ENCODE measurements at regions of chr10 and their contacts with region 1.

Region 1: DNA sequence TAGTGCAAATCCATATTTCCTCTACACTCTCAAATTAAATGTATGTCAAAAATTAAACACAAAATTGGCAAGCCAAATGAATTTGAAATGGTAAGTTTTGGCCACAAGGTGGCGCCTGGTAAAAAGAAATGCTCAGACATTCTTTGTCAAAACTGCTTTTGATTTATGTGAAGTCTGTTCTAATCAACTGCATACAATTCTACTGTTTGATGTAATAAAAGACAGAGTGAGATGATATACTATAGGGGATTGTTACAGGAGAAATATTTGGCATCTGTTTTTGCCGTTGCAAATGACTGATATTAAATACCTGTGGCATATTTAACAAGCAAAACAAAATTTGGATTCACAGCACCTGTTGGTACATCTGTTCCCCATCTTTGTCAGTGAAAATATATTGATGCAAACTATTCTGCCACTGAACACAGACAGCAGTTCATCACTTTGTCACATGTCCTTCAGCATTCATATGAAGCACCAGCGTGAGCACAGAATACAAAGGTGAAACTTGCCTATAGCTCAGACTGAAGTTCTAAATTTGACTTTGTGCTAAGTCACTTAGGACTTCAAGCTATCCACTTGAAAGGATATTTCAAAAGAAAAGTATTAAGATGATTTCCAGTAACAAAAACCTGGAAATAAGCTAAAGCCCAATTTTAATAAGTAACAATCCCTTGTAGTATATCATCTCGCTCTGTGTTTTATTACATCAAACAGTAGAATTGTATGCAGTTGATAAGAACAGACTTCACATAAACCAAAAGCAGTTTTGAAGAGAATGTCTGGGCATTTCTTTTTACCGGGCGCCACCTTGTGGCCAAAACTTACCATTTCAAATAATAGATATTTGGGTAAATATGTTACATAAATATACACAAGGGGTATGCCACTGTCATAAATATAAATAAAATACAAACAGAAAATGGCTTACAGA is 10.2 kb upstream of the CH25H start:
- DNase-seq: peak; percentile 20
- ATAC-seq: peak; percentile 49
- H3K4me3 Mint-ChIP-seq: no peak overlapping the region
- H3K27ac Mint-ChIP-seq: no peak overlapping the region
- H3K4me1 Mint-ChIP-seq: peaks cover 10% of the 10 kb centered on the region
- H3K27me3 Mint-ChIP-seq: peaks cover 2% of the 10 kb centered on the region
- CTCF ChIP-seq: no peak

Region 2: GRCh38 chr10:88565072-88565471 is 652.3 kb before region 1 on chr10:
- CTCF ChIA-PET with region 1: interaction called, 4 read pairs
- POLR2A ChIA-PET with region 1: no interaction called
- intact Hi-C with region 1: loop called (anchors 10 kb)
- DNase-seq: no peak
- ATAC-seq: peak; percentile 28
- H3K4me3 Mint-ChIP-seq: no peak overlapping the region
- H3K27ac Mint-ChIP-seq: no peak overlapping the region
- H3K4me1 Mint-ChIP-seq: peaks cover 4% of the 10 kb centered on the region
- H3K27me3 Mint-ChIP-seq: no peaks in the 10 kb centered on the region
- CTCF ChIP-seq: no peak

Region 3: GRCh38 chr10:89207181-89207800 is 10.0 kb before region 1 on chr10 and contains the start of gene CH25H:
- CTCF ChIA-PET with region 1: interaction called, 17 read pairs
- POLR2A ChIA-PET with region 1: no interaction called
- intact Hi-C with region 1: no loop called
- DNase-seq: no peak
- ATAC-seq: peak; percentile 65
- H3K4me3 Mint-ChIP-seq: peak within 1 kb of the TSS; percentile 83
- H3K27ac Mint-ChIP-seq: no peak within 1 kb of the TSS
- H3K4me1 Mint-ChIP-seq: peaks cover 27% of the 10 kb centered on the region
- H3K27me3 Mint-ChIP-seq: peaks cover 47% of the 10 kb centered on the region
- CTCF ChIP-seq: no peak
- total RNA-seq, gene CH25H: not detected in 2 replicates

Region 4: DNA sequence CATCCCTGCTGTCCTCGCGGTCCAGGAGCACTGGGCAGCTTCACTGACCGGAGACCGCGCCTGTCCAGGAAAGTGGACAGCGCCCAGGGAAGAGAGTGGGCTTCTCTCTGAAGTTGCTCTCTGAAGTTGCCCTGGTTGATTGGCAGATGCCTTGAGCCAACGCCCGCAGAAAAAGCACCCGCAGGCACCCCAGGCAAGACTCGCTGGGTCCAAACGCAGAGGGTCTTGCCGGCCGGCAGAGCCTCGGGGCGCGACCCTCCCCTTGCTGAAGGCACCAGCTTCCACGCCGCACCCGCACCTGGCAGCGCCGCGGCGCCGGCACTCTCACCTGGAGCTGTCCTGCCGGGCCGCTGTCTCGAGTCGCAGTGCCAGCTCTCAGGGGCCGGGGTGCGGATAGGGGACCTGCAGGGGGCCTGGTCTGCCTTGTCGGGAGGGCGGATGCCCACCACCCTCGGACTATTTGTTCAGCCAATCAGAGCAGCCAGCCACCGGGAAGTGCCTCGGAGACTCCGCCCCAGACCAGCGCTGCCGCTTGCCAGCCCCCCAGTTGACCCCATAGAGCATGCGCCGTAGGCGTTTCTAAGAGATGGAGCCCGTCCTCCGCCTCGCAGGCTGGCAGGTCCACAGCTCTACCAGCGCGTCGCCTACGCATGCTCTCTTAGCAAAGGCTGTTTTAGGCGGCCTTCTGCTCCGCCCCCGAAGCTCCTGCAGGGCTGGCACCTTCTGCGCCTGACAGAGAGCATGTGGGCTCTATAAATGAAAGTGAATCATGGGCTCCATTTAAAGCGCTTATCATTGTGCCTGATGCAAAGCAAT is 34.3 kb after region 1 on chr10 and contains the start of gene LIPA:
- CTCF ChIA-PET with region 1: interaction called, 13 read pairs
- POLR2A ChIA-PET with region 1: no interaction called
- intact Hi-C with region 1: no loop called
- DNase-seq: peak; percentile 90
- ATAC-seq: peak; percentile 93
- H3K4me3 Mint-ChIP-seq: peak within 1 kb of the TSS; percentile 91
- H3K27ac Mint-ChIP-seq: peak within 1 kb of the TSS; percentile 79
- H3K4me1 Mint-ChIP-seq: peaks cover 26% of the 10 kb centered on the region
- H3K27me3 Mint-ChIP-seq: peaks cover 3% of the 10 kb centered on the region
- CTCF ChIP-seq: no peak
- total RNA-seq, gene LIPA: 32.8 and 35.3 TPM in 2 replicates

Region 5: DNA sequence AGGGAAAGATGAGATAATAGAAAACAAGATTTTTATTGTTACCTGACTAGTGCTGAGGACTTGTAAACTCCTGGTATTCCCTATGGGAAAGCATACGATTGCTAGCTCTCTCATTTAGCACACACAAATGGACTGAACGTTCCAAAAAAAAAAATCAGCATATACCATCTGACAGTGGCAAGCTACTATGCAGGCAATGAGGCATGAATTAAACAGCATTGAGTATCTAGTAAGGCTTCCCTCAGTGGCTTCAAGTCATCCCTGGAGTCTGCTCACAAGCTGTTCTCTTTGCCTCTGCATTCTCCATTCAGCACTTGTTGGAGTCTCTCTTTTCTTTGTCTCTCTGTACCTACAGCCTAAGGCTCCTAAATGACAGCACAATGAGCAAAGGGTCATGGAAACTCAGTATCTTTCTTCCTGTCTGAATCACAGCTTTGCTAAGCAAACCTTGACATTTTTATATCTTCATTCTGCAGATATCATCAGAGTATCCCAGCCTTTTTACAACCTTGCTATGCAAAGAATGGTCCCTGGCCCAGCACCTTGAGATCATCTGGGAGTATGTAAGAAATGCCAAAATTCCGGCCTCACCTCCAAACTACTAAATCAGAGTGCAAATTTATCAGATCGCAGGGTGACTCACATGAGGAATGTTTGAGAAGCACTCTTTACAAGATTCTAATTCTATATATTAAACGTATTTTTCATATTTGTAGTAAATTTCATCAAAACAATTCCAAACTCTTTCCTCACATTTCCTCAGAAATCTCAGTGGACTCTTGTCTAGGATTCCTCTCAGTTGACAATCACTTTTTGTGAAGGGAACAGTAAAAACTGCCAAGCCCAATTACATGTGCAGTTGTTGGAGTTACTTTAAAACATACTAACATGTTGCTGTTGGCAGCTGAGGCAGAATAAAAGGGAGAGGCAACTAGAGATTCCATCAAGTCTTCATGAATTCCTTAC is 45.0 kb after region 1 on chr10:
- CTCF ChIA-PET with region 1: no interaction called
- POLR2A ChIA-PET with region 1: no interaction called
- intact Hi-C with region 1: no loop called
- DNase-seq: no peak
- ATAC-seq: no peak
- H3K4me3 Mint-ChIP-seq: no peak overlapping the region
- H3K27ac Mint-ChIP-seq: no peak overlapping the region
- H3K4me1 Mint-ChIP-seq: peaks cover 3% of the 10 kb centered on the region
- H3K27me3 Mint-ChIP-seq: no peaks in the 10 kb centered on the region
- CTCF ChIP-seq: no peak

Region 6: GRCh38 chr10:89563861-89564478 is 346.6 kb after region 1 on chr10:
- CTCF ChIA-PET with region 1: interaction called, 8 read pairs
- POLR2A ChIA-PET with region 1: no interaction called
- intact Hi-C with region 1: loop called (anchors 1 kb)
- DNase-seq: no peak
- ATAC-seq: peak; percentile 57
- H3K4me3 Mint-ChIP-seq: no peak overlapping the region
- H3K27ac Mint-ChIP-seq: no peak overlapping the region
- H3K4me1 Mint-ChIP-seq: no peaks in the 10 kb centered on the region
- H3K27me3 Mint-ChIP-seq: peaks cover 14% of the 10 kb centered on the region
- CTCF ChIP-seq: no peak

Region 7: DNA sequence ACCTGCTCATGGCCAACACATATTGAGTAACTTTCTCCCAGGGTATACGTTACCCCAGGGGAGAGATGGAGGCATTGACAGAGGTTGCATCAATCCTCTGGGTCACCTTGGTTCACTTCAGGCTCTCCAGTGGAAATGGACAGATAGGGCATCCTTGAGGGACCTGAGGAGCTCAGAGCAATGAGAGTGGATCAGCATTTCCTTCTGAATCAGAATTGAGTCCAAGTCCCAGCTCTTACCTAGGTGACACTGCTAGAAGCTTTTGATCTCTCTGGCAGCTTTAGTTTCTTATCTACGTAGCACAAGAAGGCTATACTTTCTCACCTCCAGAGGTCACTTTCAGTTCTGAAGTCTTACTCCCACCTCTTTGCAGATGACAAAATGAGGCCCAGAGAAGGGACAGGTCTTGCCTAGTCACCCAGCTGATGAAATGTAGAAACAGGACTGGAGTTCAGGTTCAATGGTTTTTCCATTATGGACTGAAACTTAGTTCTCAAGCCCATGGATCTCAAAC is 392.6 kb after region 1 on chr10:
- CTCF ChIA-PET with region 1: no interaction called
- POLR2A ChIA-PET with region 1: no interaction called
- intact Hi-C with region 1: no loop called
- DNase-seq: no peak
- ATAC-seq: no peak
- H3K4me3 Mint-ChIP-seq: no peak overlapping the region
- H3K27ac Mint-ChIP-seq: no peak overlapping the region
- H3K4me1 Mint-ChIP-seq: no peaks in the 10 kb centered on the region
- H3K27me3 Mint-ChIP-seq: no peaks in the 10 kb centered on the region
- CTCF ChIP-seq: no peak

Region 8: GRCh38 chr10:89665302-89665701 is 448.0 kb after region 1 on chr10:
- CTCF ChIA-PET with region 1: no interaction called
- POLR2A ChIA-PET with region 1: no interaction called
- intact Hi-C with region 1: no loop called
- DNase-seq: no peak
- ATAC-seq: no peak
- H3K4me3 Mint-ChIP-seq: no peak overlapping the region
- H3K27ac Mint-ChIP-seq: no peak overlapping the region
- H3K4me1 Mint-ChIP-seq: no peaks in the 10 kb centered on the region
- H3K27me3 Mint-ChIP-seq: no peaks in the 10 kb centered on the region
- CTCF ChIP-seq: no peak

Measured in activated B cell treated with CpG ODN at 0.5 μM for 24 hours (primary cell).